Panc1 (cell line): ENCODE measurements at regions of chr10 and their contacts with region 1.

Region 1: GRCh38 chr10:82452046-82452445 is 577.1 kb downstream of the NRG3 start:
- DNase-seq: no peak
- ATAC-seq: no peak
- H3K4me3 ChIP-seq: no peak overlapping the region
- H3K27ac ChIP-seq: no peak overlapping the region
- H3K4me1 ChIP-seq: no peaks in the 10 kb centered on the region
- H3K27me3 ChIP-seq: no peaks in the 10 kb centered on the region
- CTCF ChIP-seq: no peak

Region 2: GRCh38 chr10:82429302-82429701 is 22.7 kb before region 1 on chr10:
- CTCF ChIA-PET with region 1: no interaction called
- POLR2A ChIA-PET with region 1: no interaction called
- in situ Hi-C with region 1: no loop called
- intact Hi-C with region 1: no loop called
- DNase-seq: no peak
- ATAC-seq: no peak
- H3K4me3 ChIP-seq: no peak overlapping the region
- H3K27ac ChIP-seq: no peak overlapping the region
- H3K4me1 ChIP-seq: no peaks in the 10 kb centered on the region
- H3K27me3 ChIP-seq: no peaks in the 10 kb centered on the region
- CTCF ChIP-seq: no peak

Region 3: GRCh38 chr10:82462910-82463551 is 11.0 kb after region 1 on chr10:
- CTCF ChIA-PET with region 1: no interaction called
- POLR2A ChIA-PET with region 1: no interaction called
- in situ Hi-C with region 1: no loop called
- intact Hi-C with region 1: no loop called
- DNase-seq: no peak
- ATAC-seq: no peak
- H3K4me3 ChIP-seq: no peak overlapping the region
- H3K27ac ChIP-seq: no peak overlapping the region
- H3K4me1 ChIP-seq: no peaks in the 10 kb centered on the region
- H3K27me3 ChIP-seq: no peaks in the 10 kb centered on the region
- CTCF ChIP-seq: no peak

Region 4: DNA sequence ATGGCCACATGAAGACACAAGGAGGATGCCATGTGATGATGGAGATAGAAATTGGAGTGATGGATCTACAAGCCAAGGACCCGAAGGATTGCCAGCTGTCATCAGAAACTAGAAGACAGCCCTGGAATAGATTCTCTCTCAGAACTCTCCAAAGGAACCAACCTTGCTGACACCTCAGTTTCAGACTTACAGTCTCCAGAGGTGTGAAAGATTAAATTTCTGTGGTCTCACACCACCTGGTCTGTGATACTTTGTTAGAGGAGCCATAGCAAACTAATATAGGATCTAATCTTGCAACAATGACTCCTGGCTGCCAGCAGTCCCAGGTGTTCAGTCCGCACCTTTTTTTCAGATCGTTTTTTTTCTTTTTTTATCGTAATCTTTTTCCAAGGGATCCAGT is 1040.0 kb after region 1 on chr10:
- CTCF ChIA-PET with region 1: no interaction called
- POLR2A ChIA-PET with region 1: no interaction called
- in situ Hi-C with region 1: no loop called
- intact Hi-C with region 1: loop called (anchors 10 kb)
- DNase-seq: no peak
- ATAC-seq: no peak
- H3K4me3 ChIP-seq: no peak overlapping the region
- H3K27ac ChIP-seq: no peak overlapping the region
- H3K4me1 ChIP-seq: no peaks in the 10 kb centered on the region
- H3K27me3 ChIP-seq: no peaks in the 10 kb centered on the region
- CTCF ChIP-seq: no peak